Psoas muscle (tissue), 8 donors: ENCODE measurements at regions of chr17 and their contacts with region 1.

Region 1: DNA sequence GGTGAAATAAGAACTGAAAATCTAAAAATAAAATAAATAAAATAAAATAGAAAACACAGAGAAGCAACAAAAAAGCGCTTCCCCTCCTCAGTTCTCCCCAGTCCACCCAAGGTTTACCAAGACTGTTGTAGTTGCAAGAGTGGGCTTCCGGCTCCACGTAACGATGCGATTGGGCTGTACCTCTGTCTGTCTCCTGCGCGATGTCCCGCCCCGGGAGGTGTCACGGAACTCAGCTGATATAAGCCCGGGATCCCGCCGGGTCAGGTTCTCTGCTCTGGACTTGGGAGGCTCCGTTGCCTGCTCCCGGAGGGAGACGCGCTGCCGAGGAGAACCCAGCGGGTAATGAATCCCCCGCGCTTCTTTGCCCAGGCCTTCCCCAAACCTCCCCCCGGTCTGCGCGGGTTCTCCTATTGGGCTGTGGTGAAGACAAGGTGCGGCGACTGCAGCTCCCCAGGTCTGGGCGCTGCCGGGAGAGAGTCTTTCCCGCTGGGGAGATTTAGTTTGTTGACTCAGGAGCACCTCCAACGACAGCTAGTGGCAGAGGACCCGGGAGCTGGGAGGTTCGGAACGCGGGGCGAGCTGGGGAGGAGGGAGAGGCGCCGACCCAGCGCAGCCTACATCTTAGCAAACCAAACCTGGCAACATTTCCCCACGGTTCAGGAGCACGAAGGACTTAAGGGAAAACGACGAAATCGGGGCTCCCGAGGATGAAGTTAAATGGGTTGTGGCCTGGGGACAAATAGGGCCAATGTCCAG is at the start of gene SLFN5:
- DNase-seq: peak; percentile 93 to 96
- ATAC-seq: peak; percentile 93 to 96 (median 94)
- H3K4me3 ChIP-seq: peak within 1 kb of the TSS; percentile 89
- H3K27ac ChIP-seq: peak within 1 kb of the TSS; percentile 91
- H3K4me1 ChIP-seq: peaks cover 25% of the 10 kb centered on the region
- H3K27me3 ChIP-seq: no peaks in the 10 kb centered on the region
- CTCF ChIP-seq: no peak
- total RNA-seq, gene SLFN5: 14.5 to 23.7 (median 20.0) TPM

Region 2: DNA sequence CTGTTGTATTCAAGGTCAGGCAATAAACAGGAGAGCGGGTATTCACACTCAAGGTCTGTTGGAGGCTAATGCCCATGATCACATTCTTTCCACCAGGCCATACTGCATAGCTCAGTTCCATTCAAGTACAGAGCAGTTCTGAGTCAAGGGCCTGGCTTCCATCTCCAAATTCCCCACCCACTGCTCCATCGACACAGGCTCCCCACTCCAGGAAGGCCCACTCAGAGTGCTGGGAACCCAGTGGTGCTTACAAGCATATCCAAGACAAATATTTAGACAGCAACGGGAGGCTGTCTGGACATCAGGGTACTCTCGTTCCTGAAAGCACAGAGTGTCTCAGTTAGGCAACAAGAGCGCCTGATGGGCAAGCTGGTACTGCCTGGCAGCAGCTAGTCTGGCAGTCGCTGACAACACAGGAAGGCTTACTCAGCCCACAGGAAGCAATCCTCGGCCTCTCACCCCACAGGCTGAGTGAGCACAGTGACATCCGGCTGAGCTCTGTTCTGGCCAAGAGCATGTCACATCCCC is 220.4 kb before region 1 on chr17:
- intact Hi-C with region 1: no loop called
- DNase-seq: peak; percentile 72 to 79
- ATAC-seq: peak; percentile 82 to 94 (median 93)
- H3K4me3 ChIP-seq: no peak overlapping the region
- H3K27ac ChIP-seq: peak overlapping the region; percentile 50
- H3K4me1 ChIP-seq: peaks cover 13% of the 10 kb centered on the region
- H3K27me3 ChIP-seq: no peaks in the 10 kb centered on the region
- CTCF ChIP-seq: no peak

Region 3: DNA sequence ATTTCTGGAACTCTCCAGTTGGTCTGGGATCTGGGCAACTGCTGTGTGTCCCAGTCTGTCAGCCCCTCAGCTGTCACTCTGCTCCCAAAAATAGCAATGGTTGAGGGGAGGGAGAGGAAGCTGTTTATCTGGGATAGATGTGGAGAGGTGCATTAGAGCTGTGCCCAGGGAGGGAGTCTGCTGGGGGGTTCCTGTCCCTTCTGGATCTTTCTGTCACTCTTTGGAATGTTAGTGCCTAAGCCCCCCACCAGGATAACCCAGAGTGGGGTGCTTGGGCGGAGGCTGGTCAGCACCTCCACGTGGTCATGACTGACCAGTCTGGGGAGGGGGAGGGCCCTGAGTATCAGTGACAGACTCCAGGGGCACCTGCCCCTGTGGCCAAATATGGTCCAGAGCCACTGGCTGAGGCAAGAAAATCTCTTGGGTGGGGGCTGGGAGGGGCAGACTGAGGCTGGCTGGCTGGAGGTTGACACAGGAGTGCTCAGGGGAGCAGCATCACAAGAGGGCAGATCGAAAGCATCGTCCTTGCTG is 95.5 kb before region 1 on chr17 and contains the start of gene UNC45B:
- intact Hi-C with region 1: loop called in 1 of 2 experiments (anchors 2 kb)
- DNase-seq: peak; percentile 75 to 88
- ATAC-seq: peak; percentile 91 to 96 (median 96)
- H3K4me3 ChIP-seq: peak within 1 kb of the TSS; percentile 78
- H3K27ac ChIP-seq: peak within 1 kb of the TSS; percentile 94
- H3K4me1 ChIP-seq: peaks cover 29% of the 10 kb centered on the region
- H3K27me3 ChIP-seq: no peaks in the 10 kb centered on the region
- CTCF ChIP-seq: no peak
- total RNA-seq, gene UNC45B: 109 to 395 (median 175) TPM

Region 4: GRCh38 chr17:35254107-35254802 is 11.3 kb after region 1 on chr17:
- intact Hi-C with region 1: loop called in 1 of 2 experiments (anchors 1 kb)
- DNase-seq: peak in 1 of 2 donors; percentile 36
- ATAC-seq: peak; percentile 80 to 93 (median 91)
- H3K4me3 ChIP-seq: no peak overlapping the region
- H3K27ac ChIP-seq: peak overlapping the region; percentile 32
- H3K4me1 ChIP-seq: peaks cover 27% of the 10 kb centered on the region
- H3K27me3 ChIP-seq: no peaks in the 10 kb centered on the region
- CTCF ChIP-seq: no peak